Activated naive CD4-positive, alpha-beta T cell treated with anti-CD3 and anti-CD28 coated beads for 36 hours (primary cell): ENCODE measurements at regions of chr1 and their contacts with region 1.

Region 1: GRCh38 chr1:168439456-168440375 is 104.1 kb downstream of the XCL2 start:
- DNase-seq: peak; percentile 91
- H3K4me3 Mint-ChIP-seq: peak overlapping the region; percentile 41
- H3K27ac Mint-ChIP-seq: no peak overlapping the region
- H3K4me1 Mint-ChIP-seq: peaks cover 30% of the 10 kb centered on the region
- H3K27me3 Mint-ChIP-seq: no peaks in the 10 kb centered on the region

Region 2: GRCh38 chr1:168504064-168504837 is 64.5 kb after region 1 on chr1:
- CTCF ChIA-PET with region 1: interaction called, 10 read pairs
- intact Hi-C with region 1: no loop called
- DNase-seq: peak; percentile 56
- H3K4me3 Mint-ChIP-seq: no peak overlapping the region
- H3K27ac Mint-ChIP-seq: no peak overlapping the region
- H3K4me1 Mint-ChIP-seq: peaks cover 26% of the 10 kb centered on the region
- H3K27me3 Mint-ChIP-seq: no peaks in the 10 kb centered on the region

Region 3: GRCh38 chr1:168572633-168573032 is 132.9 kb after region 1 on chr1:
- CTCF ChIA-PET with region 1: interaction called, 5 read pairs
- intact Hi-C with region 1: loop called (anchors 1 kb)
- DNase-seq: no peak
- H3K4me3 Mint-ChIP-seq: no peak overlapping the region
- H3K27ac Mint-ChIP-seq: no peak overlapping the region
- H3K4me1 Mint-ChIP-seq: peaks cover 6% of the 10 kb centered on the region
- H3K27me3 Mint-ChIP-seq: no peaks in the 10 kb centered on the region

Region 4: DNA sequence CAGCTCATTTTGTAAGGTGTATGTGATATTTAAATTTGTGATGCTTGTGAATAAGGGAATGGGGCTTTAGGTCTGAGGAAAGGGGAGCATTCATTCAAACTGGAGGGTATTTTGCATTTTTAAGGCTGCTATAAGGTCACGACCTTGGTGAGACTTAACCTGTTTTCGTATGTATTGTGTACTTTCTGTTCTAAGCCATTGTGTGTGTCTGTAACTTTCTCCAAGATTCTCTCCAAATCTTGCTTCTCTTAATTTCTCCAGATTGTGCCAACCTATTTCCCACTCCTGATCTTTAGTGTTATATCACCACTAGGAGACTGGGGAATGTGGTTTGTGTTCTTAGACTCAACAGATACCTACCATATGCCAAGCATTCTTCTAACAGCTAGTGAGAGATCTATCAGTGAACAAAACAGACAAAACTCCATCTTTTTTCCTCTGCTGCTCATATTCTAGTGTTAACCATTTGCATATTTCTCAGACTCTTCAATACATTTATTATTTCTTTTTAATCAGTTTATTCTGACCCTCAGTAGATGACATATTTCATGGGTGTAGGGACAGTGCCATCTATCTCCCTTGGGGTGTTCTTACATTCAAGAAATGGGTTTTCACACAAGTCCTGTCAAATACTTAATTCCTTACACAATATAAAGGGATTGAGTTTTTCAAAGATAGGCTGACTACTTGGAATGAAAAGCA is 694.2 kb after region 1 on chr1:
- CTCF ChIA-PET with region 1: no interaction called
- intact Hi-C with region 1: loop called (anchors 1 kb)
- DNase-seq: no peak
- H3K4me3 Mint-ChIP-seq: no peak overlapping the region
- H3K27ac Mint-ChIP-seq: no peak overlapping the region
- H3K4me1 Mint-ChIP-seq: peaks cover 5% of the 10 kb centered on the region
- H3K27me3 Mint-ChIP-seq: no peaks in the 10 kb centered on the region